Activated CD8-positive, alpha-beta T cell treated with anti-CD3 and anti-CD28 coated beads for 36 hours (primary cell): ENCODE measurements at regions of chr9 and their contacts with region 1.

Region 1: DNA sequence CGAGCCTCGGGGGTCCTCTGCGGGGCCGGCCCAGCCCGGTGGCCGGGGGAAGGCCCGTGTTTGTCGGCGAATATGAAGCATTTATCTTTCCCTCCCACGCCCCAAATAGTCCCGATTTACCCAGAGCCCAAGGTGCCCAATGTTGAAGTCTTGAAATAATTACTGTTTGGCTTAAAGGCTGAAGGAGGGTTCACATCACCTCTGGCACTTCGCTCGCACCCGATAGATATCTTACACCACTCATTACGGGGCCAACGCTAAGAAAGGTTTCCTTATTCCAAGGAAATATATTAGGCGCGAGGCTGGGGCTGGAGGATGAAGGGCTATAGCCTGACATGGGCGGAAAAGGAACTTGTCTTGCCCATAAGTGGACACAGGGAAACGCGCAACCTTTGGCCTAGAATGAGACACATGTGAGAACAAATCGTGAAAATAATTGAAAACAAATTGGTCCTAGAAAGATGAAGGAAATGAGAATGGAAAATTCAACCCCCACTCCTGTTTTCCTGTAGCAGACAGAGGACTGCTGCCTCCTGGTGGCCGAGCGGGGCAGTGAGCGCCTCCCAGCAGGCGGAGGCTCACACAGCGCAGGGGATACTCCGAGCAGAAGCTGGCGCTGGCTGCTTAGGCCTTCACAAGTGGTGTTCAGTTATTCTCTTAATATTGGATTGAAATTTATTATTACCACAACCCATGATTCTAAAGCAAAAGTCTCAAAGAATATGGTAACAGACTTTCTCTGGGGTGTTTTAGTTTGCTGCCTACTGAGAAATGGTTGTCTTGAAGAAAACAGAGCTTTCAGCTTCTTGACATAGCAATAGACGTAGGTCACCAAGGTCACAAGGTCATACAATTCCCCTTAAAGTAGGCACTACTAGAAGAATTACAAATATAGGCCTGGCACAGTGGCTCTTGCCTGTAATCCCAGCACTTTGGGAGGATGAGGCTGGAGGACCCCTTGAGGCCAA is 7.9 kb downstream of the CCL21 start:
- DNase-seq: peak; percentile 88
- ATAC-seq: peak; percentile 82
- H3K4me3 Mint-ChIP-seq: peak overlapping the region; percentile 69
- H3K27ac Mint-ChIP-seq: peak overlapping the region; percentile 16
- H3K4me1 Mint-ChIP-seq: peaks cover 6% of the 10 kb centered on the region
- H3K27me3 Mint-ChIP-seq: peaks cover 12% of the 10 kb centered on the region
- CTCF ChIP-seq: peak; percentile 97

Region 2: DNA sequence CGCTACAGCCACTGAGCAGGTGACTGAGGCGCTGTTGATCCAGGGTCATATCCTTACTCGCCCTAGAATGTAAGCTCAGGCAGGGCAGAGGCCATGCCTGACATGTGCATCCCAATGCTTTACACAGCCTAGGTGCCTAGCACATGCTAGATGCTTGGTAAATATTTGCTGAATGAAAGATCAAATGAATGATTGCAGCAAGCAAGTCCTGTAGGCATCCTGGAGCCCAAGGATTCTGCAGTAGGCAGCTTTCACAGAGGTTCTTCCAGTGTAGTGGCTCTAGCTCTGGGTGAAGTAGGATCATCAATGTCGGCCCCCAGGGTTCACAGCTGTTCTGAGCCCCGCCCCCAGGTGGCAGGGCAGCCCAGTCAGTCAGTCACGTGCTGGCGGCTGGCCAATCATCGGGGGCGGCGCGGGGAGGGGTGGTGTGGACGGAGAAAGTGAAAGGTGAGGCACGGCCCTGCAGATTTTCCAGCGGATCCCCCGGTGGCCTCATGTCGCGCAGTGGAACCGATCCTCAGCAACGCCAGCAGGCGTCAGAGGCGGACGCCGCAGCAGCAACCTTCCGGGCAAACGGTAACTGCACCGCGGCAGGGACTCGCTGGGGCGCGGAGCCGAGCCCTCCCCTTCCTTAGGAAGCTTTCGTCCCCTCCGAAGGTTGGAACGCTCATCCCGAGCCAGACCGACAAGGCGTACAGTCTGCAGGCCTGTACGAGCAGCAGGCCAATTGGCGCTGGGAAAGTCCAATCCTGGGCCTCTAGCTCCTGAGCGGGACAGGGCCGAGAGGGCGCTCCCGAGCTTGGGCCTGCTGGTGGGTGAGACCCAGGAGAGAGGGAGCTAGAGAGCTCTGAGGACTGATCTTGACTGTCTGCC is 55.6 kb before region 1 on chr9 and contains the start of gene GALT:
- CTCF ChIA-PET with region 1: interaction called, 23 read pairs
- POLR2A ChIA-PET with region 1: no interaction called
- intact Hi-C with region 1: no loop called
- DNase-seq: peak; percentile 98
- ATAC-seq: peak; percentile 90
- H3K4me3 Mint-ChIP-seq: peak within 1 kb of the TSS; percentile 80
- H3K27ac Mint-ChIP-seq: peak within 1 kb of the TSS; percentile 85
- H3K4me1 Mint-ChIP-seq: peaks cover 22% of the 10 kb centered on the region
- H3K27me3 Mint-ChIP-seq: no peaks in the 10 kb centered on the region
- CTCF ChIP-seq: peak; percentile 61
- total RNA-seq, gene GALT: 42.8 to 44.5 TPM

Region 3: DNA sequence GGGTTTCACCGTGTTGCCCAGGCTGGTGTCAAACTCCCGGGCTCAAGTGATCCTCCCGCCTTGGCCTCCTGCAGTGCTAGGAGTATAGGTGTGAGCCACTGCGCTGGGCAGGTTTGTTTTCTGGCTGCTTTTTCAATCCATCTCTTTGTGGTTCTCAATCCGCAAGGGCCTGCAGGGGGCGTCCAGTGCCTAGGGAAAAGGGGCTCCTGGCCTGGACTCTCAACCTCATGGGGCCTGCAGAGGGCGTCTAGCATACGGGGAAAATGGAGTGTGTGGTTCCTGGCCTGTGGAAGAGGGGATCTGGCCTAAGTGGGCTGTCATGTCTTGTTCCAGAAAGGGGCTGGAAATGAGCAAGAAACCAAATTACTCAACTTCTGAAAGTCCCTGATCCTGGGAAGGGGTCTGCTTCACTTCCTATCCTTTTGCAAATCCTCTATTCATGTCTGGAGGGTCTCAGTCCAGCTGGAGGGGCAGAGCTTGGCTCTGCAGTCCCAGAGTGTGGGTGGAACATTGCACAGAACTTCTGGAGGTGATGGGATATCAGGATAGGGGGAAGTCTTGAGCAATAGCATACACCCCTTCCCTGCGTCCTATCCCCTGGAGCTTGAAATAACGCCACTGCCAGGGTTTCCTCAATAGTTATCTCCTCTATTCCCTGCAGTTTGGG is 26.9 kb before region 1 on chr9:
- CTCF ChIA-PET with region 1: interaction called, 56 read pairs
- POLR2A ChIA-PET with region 1: no interaction called
- intact Hi-C with region 1: no loop called
- DNase-seq: peak; percentile 83
- ATAC-seq: peak; percentile 89
- H3K4me3 Mint-ChIP-seq: no peak overlapping the region
- H3K27ac Mint-ChIP-seq: no peak overlapping the region
- H3K4me1 Mint-ChIP-seq: no peaks in the 10 kb centered on the region
- H3K27me3 Mint-ChIP-seq: no peaks in the 10 kb centered on the region
- CTCF ChIP-seq: peak; percentile 74

Region 4: GRCh38 chr9:34690983-34691935 is 10.8 kb before region 1 on chr9 and contains the start of gene CCL19:
- CTCF ChIA-PET with region 1: interaction called, 35 read pairs
- POLR2A ChIA-PET with region 1: no interaction called
- intact Hi-C with region 1: no loop called
- DNase-seq: no peak
- ATAC-seq: no peak
- H3K4me3 Mint-ChIP-seq: no peak within 1 kb of the TSS
- H3K27ac Mint-ChIP-seq: no peak within 1 kb of the TSS
- H3K4me1 Mint-ChIP-seq: no peaks in the 10 kb centered on the region
- H3K27me3 Mint-ChIP-seq: peaks cover 4% of the 10 kb centered on the region
- CTCF ChIP-seq: no peak
- total RNA-seq, gene CCL19: not detected

Region 5: DNA sequence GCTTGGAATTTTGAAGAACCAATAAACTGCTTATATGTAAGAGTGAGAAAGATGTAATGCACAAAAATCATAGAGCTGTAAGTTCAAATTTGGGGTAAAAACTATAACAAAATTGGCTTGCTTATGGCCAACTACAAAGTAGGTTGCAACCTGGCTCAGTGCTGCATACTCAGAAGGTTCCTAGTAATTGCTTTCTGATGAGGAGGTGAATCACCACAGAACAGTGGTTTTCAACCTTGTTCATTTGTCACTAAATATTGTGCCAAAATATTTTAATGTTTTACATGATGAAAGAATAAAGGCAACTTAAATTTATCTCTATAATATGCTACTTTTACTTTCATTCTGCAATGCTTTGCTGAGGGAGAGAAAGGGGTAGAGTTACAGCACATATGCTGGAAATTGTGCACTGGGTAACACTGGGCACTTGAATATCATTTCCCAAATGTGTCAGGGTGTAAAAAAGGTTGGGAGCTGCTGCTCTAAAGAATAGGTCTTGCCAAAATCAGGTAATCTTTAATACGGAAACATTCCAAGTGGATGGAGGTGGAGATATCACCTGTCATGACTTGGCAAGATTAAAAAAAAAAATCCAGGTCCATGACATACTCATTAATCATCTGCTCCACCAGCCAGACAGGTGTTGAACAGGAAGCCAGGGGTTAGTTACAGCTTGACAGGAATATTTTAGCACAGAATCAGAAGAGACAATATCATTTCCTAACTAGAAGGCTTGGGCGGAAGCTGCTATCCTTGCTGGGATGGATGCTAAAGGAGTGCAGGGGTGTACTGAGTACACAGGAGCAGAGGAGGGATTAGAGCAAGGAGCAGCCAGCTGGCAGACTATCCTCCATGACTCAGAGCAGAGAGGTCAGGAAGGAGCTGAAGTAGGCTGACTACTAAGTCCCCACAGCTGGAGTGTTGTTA is 42.5 kb after region 1 on chr9:
- CTCF ChIA-PET with region 1: interaction called, 17 read pairs
- POLR2A ChIA-PET with region 1: no interaction called
- intact Hi-C with region 1: no loop called
- DNase-seq: no peak
- ATAC-seq: no peak
- H3K4me3 Mint-ChIP-seq: no peak overlapping the region
- H3K27ac Mint-ChIP-seq: no peak overlapping the region
- H3K4me1 Mint-ChIP-seq: no peaks in the 10 kb centered on the region
- H3K27me3 Mint-ChIP-seq: peaks cover 20% of the 10 kb centered on the region
- CTCF ChIP-seq: no peak

Region 6: GRCh38 chr9:34825775-34826174 is 123.7 kb after region 1 on chr9:
- CTCF ChIA-PET with region 1: no interaction called
- POLR2A ChIA-PET with region 1: no interaction called
- intact Hi-C with region 1: no loop called
- DNase-seq: no peak
- ATAC-seq: no peak
- H3K4me3 Mint-ChIP-seq: no peak overlapping the region
- H3K27ac Mint-ChIP-seq: no peak overlapping the region
- H3K4me1 Mint-ChIP-seq: no peaks in the 10 kb centered on the region
- H3K27me3 Mint-ChIP-seq: peaks cover 18% of the 10 kb centered on the region
- CTCF ChIP-seq: no peak

Region 7: DNA sequence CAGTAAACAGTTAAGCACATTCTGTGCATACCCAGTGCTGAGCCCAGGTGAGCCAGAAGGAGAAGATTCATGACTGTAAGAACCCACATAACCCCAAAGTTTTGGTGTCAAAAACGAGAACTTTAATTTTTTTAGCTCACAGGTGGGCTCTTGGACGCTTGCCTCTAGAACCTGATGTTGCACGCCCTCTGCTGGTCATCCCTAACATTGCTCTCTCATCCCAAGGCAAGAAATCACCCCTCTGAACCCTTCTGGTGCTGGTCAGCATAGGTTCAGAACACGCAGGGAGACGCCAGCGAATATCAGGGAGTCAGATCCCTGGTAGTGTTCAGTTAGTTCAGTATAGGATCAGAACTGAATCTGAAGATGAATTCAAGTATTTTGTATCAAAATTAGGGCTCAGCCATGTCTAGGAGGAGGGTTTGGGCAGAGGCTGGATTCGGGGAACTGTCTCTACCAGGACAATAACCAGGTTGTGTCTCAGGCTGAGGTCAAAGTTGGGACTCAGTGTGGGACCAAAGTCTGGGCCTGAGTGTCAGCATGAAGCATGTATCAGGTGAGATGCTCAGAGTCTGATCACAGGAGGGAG is 283.4 kb after region 1 on chr9:
- CTCF ChIA-PET with region 1: no interaction called
- POLR2A ChIA-PET with region 1: no interaction called
- intact Hi-C with region 1: no loop called
- DNase-seq: peak; percentile 84
- ATAC-seq: no peak
- H3K4me3 Mint-ChIP-seq: no peak overlapping the region
- H3K27ac Mint-ChIP-seq: peak overlapping the region; percentile 32
- H3K4me1 Mint-ChIP-seq: peaks cover 58% of the 10 kb centered on the region
- H3K27me3 Mint-ChIP-seq: no peaks in the 10 kb centered on the region
- CTCF ChIP-seq: peak; percentile 89